CD8-positive, alpha-beta T cell (primary cell): ENCODE measurements at regions of chr12 and their contacts with region 1.

Region 1: DNA sequence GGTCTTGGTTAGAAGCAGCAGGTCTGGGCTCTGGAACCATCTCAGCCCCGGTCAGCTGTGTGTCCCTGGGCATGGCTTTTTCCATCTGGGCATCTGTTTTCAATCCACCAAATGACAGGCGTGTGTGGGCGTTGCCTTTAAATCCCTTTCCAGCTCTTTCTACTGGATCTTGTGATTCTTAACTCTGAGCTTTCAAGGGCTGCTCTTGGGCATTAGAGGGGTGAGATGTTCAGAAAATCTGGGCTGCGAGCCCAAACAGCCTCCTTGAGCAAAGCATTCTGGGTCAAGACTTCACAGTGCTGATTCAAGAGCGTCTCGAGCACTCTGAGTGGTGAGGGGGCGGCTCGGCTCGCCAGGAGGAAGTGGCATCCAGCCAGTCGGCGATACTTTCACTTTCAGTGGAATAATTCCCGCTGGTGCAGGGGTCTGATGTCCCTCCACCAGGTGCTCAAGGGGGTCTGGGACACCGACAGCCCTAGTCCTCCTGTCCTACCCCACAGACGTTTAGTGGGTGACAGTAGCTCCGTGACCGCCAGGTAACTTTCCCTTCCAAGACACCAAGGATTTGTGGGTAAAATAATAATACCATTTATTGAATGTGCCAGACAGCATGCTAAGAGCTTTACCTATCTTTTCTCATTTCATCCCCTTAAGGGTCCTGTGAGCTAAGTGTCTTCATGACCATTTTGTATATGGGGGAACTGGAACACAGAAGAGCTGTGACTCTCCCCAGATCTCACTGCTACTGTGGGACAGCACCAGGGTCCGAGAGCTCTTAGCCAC is 114.0 kb downstream of the PLXNC1 start:
- DNase-seq: peak; percentile 45 to 90 (median 79)
- ATAC-seq: peak; percentile 91
- H3K4me3 ChIP-seq: peak overlapping the region; percentile 63 to 68
- H3K4me3 Mint-ChIP-seq: peak overlapping the region; percentile 99
- H3K27ac ChIP-seq: peak overlapping the region; percentile 74 to 92
- H3K27ac Mint-ChIP-seq: peak overlapping the region; percentile 99
- H3K4me1 ChIP-seq: peaks cover 21% of the 10 kb centered on the region
- H3K4me1 Mint-ChIP-seq: peaks cover 44% of the 10 kb centered on the region
- H3K27me3 ChIP-seq: no peaks in the 10 kb centered on the region
- H3K27me3 Mint-ChIP-seq: no peaks in the 10 kb centered on the region
- CTCF ChIP-seq: no peak

Region 2: GRCh38 chr12:94207849-94208621 is 54.4 kb before region 1 on chr12:
- CTCF ChIA-PET with region 1: no interaction called
- POLR2A ChIA-PET with region 1: interaction called, 3 read pairs
- intact Hi-C with region 1: loop called (anchors 2 to 5 kb)
- DNase-seq: peak in 6 of 9 experiments; percentile 11 to 73 (median 42)
- ATAC-seq: peak; percentile 83
- H3K4me3 ChIP-seq: peak overlapping the region; percentile 36
- H3K4me3 Mint-ChIP-seq: peak overlapping the region; percentile 79
- H3K27ac ChIP-seq: peak overlapping the region; percentile 48 to 82
- H3K27ac Mint-ChIP-seq: peak overlapping the region; percentile 94
- H3K4me1 ChIP-seq: peaks cover 50% of the 10 kb centered on the region
- H3K4me1 Mint-ChIP-seq: peaks cover 56% of the 10 kb centered on the region
- H3K27me3 ChIP-seq: no peaks in the 10 kb centered on the region
- H3K27me3 Mint-ChIP-seq: no peaks in the 10 kb centered on the region
- CTCF ChIP-seq: no peak

Region 3: GRCh38 chr12:94282675-94283074 is 20.3 kb after region 1 on chr12:
- CTCF ChIA-PET with region 1: no interaction called
- POLR2A ChIA-PET with region 1: interaction called, 8 read pairs
- intact Hi-C with region 1: loop called in 1 of 2 experiments (anchors 1 kb)
- DNase-seq: peak; percentile 10 to 74 (median 50)
- ATAC-seq: peak; percentile 88
- H3K4me3 ChIP-seq: no peak overlapping the region
- H3K4me3 Mint-ChIP-seq: peak overlapping the region; percentile 66
- H3K27ac ChIP-seq: peak overlapping the region; percentile 4 to 67
- H3K27ac Mint-ChIP-seq: peak overlapping the region; percentile 92
- H3K4me1 ChIP-seq: peaks cover 18% of the 10 kb centered on the region
- H3K4me1 Mint-ChIP-seq: peaks cover 29% of the 10 kb centered on the region
- H3K27me3 ChIP-seq: no peaks in the 10 kb centered on the region
- H3K27me3 Mint-ChIP-seq: no peaks in the 10 kb centered on the region
- CTCF ChIP-seq: no peak

Region 4: GRCh38 chr12:94459728-94460615 is 197.6 kb after region 1 on chr12 and contains the start of gene CEP83:
- CTCF ChIA-PET with region 1: no interaction called
- POLR2A ChIA-PET with region 1: interaction called, 3 read pairs
- intact Hi-C with region 1: loop called (anchors 1 to 5 kb)
- DNase-seq: peak; percentile 90 to 98 (median 97)
- ATAC-seq: peak; percentile 96
- H3K4me3 ChIP-seq: peak within 1 kb of the TSS; percentile 94 to 96
- H3K4me3 Mint-ChIP-seq: peak within 1 kb of the TSS; percentile 96
- H3K27ac ChIP-seq: peak within 1 kb of the TSS; percentile 91 to 93
- H3K27ac Mint-ChIP-seq: peak within 1 kb of the TSS; percentile 94
- H3K4me1 ChIP-seq: peaks cover 6% of the 10 kb centered on the region
- H3K4me1 Mint-ChIP-seq: peaks cover 33% of the 10 kb centered on the region
- H3K27me3 ChIP-seq: peaks cover 0 to 2% of the 10 kb centered on the region in 2 experiments
- H3K27me3 Mint-ChIP-seq: peaks cover 5% of the 10 kb centered on the region
- CTCF ChIP-seq: no peak
- total RNA-seq, gene CEP83: 9.7 to 11.2 TPM

Region 5: GRCh38 chr12:95774311-95775045 is 1512.1 kb after region 1 on chr12:
- CTCF ChIA-PET with region 1: no interaction called
- POLR2A ChIA-PET with region 1: no interaction called
- intact Hi-C with region 1: loop called in 1 of 2 experiments (anchors 10 kb)
- DNase-seq: no peak
- ATAC-seq: no peak
- H3K4me3 ChIP-seq: no peak overlapping the region
- H3K4me3 Mint-ChIP-seq: no peak overlapping the region
- H3K27ac ChIP-seq: no peak overlapping the region
- H3K27ac Mint-ChIP-seq: no peak overlapping the region
- H3K4me1 ChIP-seq: no peaks in the 10 kb centered on the region
- H3K4me1 Mint-ChIP-seq: no peaks in the 10 kb centered on the region
- H3K27me3 ChIP-seq: no peaks in the 10 kb centered on the region
- H3K27me3 Mint-ChIP-seq: peaks cover 24% of the 10 kb centered on the region
- CTCF ChIP-seq: no peak